Naive thymus-derived CD4-positive, alpha-beta T cell (primary cell): ENCODE measurements at regions of chr13 and their contacts with region 1.

Region 1: GRCh38 chr13:51452361-51453206 is at the start of gene INTS6:
- DNase-seq: peak; percentile 97 to 100 (median 99)
- ATAC-seq: peak; percentile 91
- H3K4me3 ChIP-seq: peak within 1 kb of the TSS; percentile 81
- H3K4me3 Mint-ChIP-seq: peak within 1 kb of the TSS; percentile 86 to 99 (median 94)
- H3K27ac ChIP-seq: peak within 1 kb of the TSS; percentile 99
- H3K27ac Mint-ChIP-seq: peak within 1 kb of the TSS; percentile 92 to 99 (median 96)
- H3K4me1 ChIP-seq: peaks cover 27 to 32% of the 10 kb centered on the region in 2 donors
- H3K4me1 Mint-ChIP-seq: peaks cover 19 to 66% (median 45%) of the 10 kb centered on the region in 7 donors
- H3K27me3 ChIP-seq: no peaks in the 10 kb centered on the region
- H3K27me3 Mint-ChIP-seq: no peaks in the 10 kb centered on the region
- total RNA-seq, gene INTS6: 60.9 to 67.0 (median 62.7) TPM

Region 2: DNA sequence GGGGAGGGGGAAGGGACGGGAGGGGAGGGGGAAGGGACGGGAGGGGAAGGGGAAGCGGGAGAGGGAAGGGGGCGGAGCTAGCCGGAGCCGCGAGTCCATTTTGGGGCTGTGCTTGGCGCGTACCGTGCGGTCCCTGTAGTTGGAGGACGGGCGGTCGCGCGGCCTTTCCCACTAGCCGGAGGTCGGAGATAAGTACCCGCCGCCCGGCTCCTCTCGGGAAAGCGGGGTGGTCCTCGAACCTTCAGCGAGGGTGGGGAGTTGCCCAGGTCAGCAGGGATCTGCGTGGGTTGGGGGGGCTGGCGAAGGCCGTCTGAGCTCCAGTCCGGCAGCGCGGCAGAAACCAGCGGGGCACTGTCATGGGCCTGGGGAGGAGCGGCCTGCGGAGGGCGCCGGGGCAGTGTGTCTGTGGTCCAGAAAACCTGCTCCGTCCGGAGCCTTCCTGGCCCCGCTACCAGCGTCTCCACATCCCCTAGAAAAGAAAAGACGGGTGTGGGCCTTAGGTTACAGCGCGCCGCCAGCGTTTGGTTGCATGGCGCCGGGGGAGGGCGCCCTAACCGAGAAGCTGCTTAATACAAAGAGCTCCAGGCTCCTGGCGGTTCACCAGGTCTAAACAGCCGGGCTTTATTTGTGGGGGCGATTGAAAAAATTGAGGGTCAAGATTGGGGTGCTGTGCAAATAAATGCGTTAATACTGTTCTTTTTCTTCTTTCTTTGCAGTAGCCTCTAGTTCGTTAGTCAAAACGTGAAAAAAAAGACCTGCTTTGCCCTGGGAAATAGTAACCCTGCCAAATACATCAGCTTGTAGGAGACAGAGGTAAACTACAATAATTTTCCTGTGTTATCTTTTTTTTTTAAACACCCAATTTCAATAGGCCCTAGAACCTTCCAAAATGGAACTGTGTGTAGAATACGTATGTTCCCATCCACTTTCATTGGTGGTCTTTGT is 1455.4 kb before region 1 on chr13 and contains the start of gene TRIM13:
- CTCF ChIA-PET with region 1: no interaction called
- POLR2A ChIA-PET with region 1: interaction called, 4 read pairs
- intact Hi-C with region 1: loop called (anchors 1 to 10 kb)
- DNase-seq: peak; percentile 64 to 85 (median 82)
- ATAC-seq: peak; percentile 88
- H3K4me3 ChIP-seq: peak within 1 kb of the TSS; percentile 97
- H3K4me3 Mint-ChIP-seq: peak within 1 kb of the TSS; percentile 83 to 95 (median 86)
- H3K27ac ChIP-seq: peak within 1 kb of the TSS; percentile 89
- H3K27ac Mint-ChIP-seq: peak within 1 kb of the TSS; percentile 84 to 92 (median 87)
- H3K4me1 ChIP-seq: peaks cover 25 to 31% of the 10 kb centered on the region in 2 donors
- H3K4me1 Mint-ChIP-seq: peaks cover 16 to 57% (median 49%) of the 10 kb centered on the region in 7 donors
- H3K27me3 ChIP-seq: no peaks in the 10 kb centered on the region
- H3K27me3 Mint-ChIP-seq: no peaks in the 10 kb centered on the region
- total RNA-seq, gene TRIM13: 18.3 to 27.1 (median 21.8) TPM

Region 3: GRCh38 chr13:50923272-50923671 is 529.3 kb before region 1 on chr13:
- CTCF ChIA-PET with region 1: no interaction called
- POLR2A ChIA-PET with region 1: no interaction called
- intact Hi-C with region 1: no loop called
- DNase-seq: no peak
- ATAC-seq: no peak
- H3K4me3 ChIP-seq: no peak overlapping the region
- H3K4me3 Mint-ChIP-seq: no peak overlapping the region
- H3K27ac ChIP-seq: no peak overlapping the region
- H3K27ac Mint-ChIP-seq: no peak overlapping the region
- H3K4me1 ChIP-seq: peaks cover 0 to 4% of the 10 kb centered on the region in 2 donors
- H3K4me1 Mint-ChIP-seq: peaks cover 20 to 59% (median 51%) of the 10 kb centered on the region in 7 donors
- H3K27me3 ChIP-seq: no peaks in the 10 kb centered on the region
- H3K27me3 Mint-ChIP-seq: no peaks in the 10 kb centered on the region

Region 4: DNA sequence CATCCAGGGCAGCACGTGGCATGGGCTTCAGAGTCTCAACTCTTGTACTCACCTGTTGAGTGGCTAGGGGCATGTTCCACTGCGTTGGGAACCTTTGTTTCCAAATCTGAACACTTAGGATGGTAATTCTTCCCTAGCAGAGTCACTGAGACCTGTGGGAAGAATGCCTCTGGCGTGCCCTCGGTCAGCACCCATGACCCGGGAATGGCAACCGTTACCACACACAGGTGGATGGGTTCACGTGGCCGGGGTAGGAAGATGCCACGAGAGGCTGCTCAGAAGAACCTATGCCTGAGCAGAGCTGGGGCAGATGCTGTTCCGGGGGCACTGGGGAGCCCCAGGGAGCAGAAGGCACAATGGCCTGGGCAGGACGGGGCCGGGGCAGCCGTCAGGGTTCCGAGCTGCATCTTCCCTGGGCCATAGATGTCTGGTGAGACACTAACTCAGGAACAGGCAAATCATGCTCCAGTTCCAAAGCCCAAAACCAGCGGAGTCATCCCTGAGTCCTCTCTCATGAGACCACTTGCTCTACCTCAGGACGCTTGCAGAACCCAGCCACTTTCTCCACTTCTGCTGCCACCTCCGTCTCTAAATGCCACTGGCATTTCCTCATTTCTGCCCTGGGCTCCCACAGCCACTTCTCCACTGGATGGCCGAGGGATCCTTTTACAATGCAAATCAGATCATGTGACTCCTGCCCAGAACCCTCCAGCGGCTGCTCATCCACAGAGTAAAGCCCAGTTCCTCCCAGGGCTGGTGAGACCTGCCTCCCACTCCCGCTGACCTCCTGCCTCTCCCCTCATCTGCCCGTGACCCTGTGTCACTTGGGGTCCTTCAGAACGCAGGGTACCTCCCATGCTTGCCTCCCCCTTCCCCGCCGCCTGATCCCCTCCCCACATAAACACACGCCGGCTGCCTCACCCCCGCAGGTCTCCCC is 193.7 kb before region 1 on chr13:
- CTCF ChIA-PET with region 1: no interaction called
- POLR2A ChIA-PET with region 1: no interaction called
- intact Hi-C with region 1: no loop called
- DNase-seq: no peak
- ATAC-seq: peak; percentile 61
- H3K4me3 ChIP-seq: no peak overlapping the region
- H3K4me3 Mint-ChIP-seq: no peak overlapping the region
- H3K27ac ChIP-seq: no peak overlapping the region
- H3K27ac Mint-ChIP-seq: no peak overlapping the region
- H3K4me1 ChIP-seq: no peaks in the 10 kb centered on the region
- H3K4me1 Mint-ChIP-seq: no peaks in the 10 kb centered on the region
- H3K27me3 ChIP-seq: no peaks in the 10 kb centered on the region
- H3K27me3 Mint-ChIP-seq: no peaks in the 10 kb centered on the region

Region 5: DNA sequence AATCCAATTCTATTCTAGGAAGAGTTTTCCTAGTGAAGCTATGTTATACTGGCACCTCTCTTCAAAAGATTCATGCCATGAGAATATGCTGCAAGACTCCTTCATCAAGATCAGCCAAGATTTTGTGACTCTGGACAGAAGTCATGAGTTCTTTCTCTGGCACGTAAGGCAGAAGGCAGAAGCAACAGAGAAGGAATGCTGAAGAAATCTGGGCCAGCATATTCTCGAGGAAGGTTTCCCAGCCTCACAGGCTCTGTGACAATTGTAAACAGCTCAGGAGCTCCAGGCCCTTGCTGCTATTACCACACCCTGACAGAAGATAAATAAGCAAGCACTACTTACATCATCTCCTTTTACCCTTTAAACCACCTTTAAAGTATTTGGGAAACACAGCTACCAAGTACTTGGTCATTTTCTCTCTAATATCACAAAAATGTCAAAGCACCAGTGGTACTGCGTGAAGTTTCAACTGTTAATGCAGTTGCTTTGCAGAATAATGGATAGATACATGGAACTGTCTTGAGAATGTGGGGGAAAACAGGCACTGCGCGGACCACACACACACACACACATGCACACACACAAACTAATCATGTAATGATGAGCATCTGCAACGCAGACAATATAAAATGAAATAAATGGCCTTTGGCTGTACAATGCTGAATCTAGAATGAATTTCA is 55.2 kb before region 1 on chr13:
- CTCF ChIA-PET with region 1: interaction called, 3 read pairs
- POLR2A ChIA-PET with region 1: no interaction called
- intact Hi-C with region 1: loop called in 1 of 2 experiments (anchors 5 kb)
- DNase-seq: no peak
- ATAC-seq: no peak
- H3K4me3 ChIP-seq: no peak overlapping the region
- H3K4me3 Mint-ChIP-seq: peak overlapping the region in 3 of 10 donors; percentile 3 to 29 (median 19)
- H3K27ac ChIP-seq: no peak overlapping the region
- H3K27ac Mint-ChIP-seq: peak overlapping the region in 3 of 9 donors; percentile 17 to 46 (median 22)
- H3K4me1 ChIP-seq: peaks cover 0 to 4% of the 10 kb centered on the region in 2 donors
- H3K4me1 Mint-ChIP-seq: peaks cover 16 to 81% (median 65%) of the 10 kb centered on the region in 7 donors
- H3K27me3 ChIP-seq: no peaks in the 10 kb centered on the region
- H3K27me3 Mint-ChIP-seq: no peaks in the 10 kb centered on the region

Region 6: GRCh38 chr13:51577680-51578079 is 125.1 kb after region 1 on chr13:
- CTCF ChIA-PET with region 1: no interaction called
- POLR2A ChIA-PET with region 1: interaction called, 26 read pairs
- intact Hi-C with region 1: no loop called
- DNase-seq: no peak
- ATAC-seq: no peak
- H3K4me3 ChIP-seq: no peak overlapping the region
- H3K4me3 Mint-ChIP-seq: no peak overlapping the region
- H3K27ac ChIP-seq: no peak overlapping the region
- H3K27ac Mint-ChIP-seq: no peak overlapping the region
- H3K4me1 ChIP-seq: no peaks in the 10 kb centered on the region
- H3K4me1 Mint-ChIP-seq: peaks cover 0 to 6% (median 3%) of the 10 kb centered on the region in 7 donors
- H3K27me3 ChIP-seq: no peaks in the 10 kb centered on the region
- H3K27me3 Mint-ChIP-seq: peaks cover 0 to 15% (median 0%) of the 10 kb centered on the region in 5 donors

Region 7: DNA sequence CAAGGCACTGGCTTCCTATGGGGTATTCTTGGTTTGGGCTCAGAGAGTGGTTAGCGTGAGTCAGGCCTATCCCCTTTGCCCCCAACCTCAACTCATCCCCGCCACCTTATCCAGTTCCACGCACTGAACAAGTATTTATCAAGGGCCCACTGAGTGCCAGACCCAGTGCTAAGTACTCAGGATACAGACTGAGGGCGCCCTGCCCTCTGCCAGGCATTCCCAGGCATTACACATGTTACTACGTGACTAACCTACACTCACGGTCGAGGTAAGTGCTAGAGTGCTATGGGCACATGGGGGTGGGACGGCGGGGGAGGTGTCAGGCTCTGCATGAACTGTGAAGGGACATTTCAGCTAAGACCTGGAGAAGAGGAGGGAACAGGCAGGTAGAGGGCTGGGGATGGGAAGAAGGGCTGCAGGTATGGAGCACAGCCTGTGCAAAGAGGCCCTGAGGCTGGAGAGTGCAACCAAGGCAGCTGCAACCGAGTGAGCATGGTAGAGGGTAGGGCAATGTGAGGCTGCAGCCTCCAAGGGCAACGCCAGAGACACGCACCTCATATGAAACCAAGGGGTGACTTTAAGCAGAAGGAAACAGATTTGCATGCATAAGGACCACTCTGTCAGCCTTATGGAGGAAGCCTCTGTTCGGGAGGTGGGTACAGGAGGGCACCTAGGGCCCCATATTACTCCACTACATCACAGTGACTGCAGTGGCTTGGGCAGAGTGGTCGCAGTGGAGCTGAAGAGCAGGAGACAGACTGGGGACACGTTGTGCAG is 328.9 kb after region 1 on chr13:
- CTCF ChIA-PET with region 1: no interaction called
- POLR2A ChIA-PET with region 1: no interaction called
- intact Hi-C with region 1: loop called in 1 of 2 experiments (anchors 5 kb)
- DNase-seq: no peak
- ATAC-seq: peak; percentile 55
- H3K4me3 ChIP-seq: no peak overlapping the region
- H3K4me3 Mint-ChIP-seq: no peak overlapping the region
- H3K27ac ChIP-seq: no peak overlapping the region
- H3K27ac Mint-ChIP-seq: peak overlapping the region in 2 of 9 donors; percentile 12 to 66
- H3K4me1 ChIP-seq: no peaks in the 10 kb centered on the region
- H3K4me1 Mint-ChIP-seq: peaks cover 0 to 7% (median 0%) of the 10 kb centered on the region in 7 donors
- H3K27me3 ChIP-seq: no peaks in the 10 kb centered on the region
- H3K27me3 Mint-ChIP-seq: no peaks in the 10 kb centered on the region

Region 8: DNA sequence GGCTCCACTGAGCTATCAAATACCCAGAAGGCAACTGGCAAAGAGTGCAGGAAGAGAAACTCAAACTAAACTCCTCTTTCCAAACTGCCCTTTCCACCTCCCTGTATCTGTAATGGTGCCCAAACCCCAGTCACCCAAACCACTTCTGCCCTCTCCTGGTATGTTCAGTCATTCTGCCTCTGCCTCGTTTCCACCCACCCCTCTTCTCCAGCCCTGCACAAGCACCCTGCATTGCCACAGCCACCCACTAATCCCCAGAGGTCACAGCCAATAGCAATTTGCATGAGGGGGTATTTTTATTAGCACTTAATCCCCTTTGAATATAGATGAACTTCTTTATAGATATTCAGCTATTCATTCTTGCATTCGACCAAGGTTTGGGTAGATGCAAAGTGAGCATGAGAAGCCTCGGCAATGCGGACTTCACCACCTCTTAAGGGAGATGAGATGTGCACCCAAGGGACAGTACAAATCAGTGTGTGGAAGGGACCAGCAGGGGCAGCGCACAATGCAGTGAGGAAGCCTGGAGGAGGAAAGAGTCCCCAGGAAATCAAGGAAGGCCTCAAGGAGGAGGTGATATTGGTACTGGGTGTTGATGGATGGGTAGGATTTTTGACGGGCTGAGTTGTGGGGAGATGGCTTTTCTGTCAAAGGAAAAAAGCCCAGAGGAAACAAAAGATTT is 380.0 kb after region 1 on chr13:
- CTCF ChIA-PET with region 1: interaction called, 4 read pairs
- POLR2A ChIA-PET with region 1: interaction called, 50 read pairs
- intact Hi-C with region 1: no loop called
- DNase-seq: peak in 7 of 9 donors; percentile 68 to 82 (median 76)
- ATAC-seq: peak; percentile 98
- H3K4me3 ChIP-seq: no peak overlapping the region
- H3K4me3 Mint-ChIP-seq: peak overlapping the region in 9 of 10 donors; percentile 37 to 77 (median 55)
- H3K27ac ChIP-seq: no peak overlapping the region
- H3K27ac Mint-ChIP-seq: peak overlapping the region in 8 of 9 donors; percentile 68 to 99 (median 78)
- H3K4me1 ChIP-seq: peaks cover 4 to 33% of the 10 kb centered on the region in 2 donors
- H3K4me1 Mint-ChIP-seq: peaks cover 28 to 54% (median 51%) of the 10 kb centered on the region in 7 donors
- H3K27me3 ChIP-seq: no peaks in the 10 kb centered on the region
- H3K27me3 Mint-ChIP-seq: peaks cover 0 to 8% (median 0%) of the 10 kb centered on the region in 5 donors

Region 9: DNA sequence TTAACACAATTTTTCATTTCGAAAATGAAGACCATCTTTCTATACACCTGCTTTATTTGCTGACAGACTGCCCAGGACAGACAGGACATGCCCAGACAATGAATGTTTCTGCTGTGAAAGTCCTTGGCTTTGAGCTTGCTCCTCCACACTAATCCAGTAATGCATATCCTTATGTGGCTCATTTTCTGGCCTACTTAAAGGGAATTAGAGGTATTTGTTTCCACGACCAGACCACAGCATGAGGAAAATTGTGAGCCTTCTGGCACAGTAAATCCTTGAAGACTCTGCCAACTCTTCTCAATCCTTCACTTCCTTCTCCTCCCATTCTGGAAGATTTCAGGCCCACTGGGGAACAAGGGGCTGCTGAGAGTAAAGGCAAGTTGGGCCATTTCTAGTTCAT is 434.9 kb after region 1 on chr13:
- CTCF ChIA-PET with region 1: no interaction called
- POLR2A ChIA-PET with region 1: no interaction called
- intact Hi-C with region 1: no loop called
- DNase-seq: no peak
- ATAC-seq: no peak
- H3K4me3 ChIP-seq: no peak overlapping the region
- H3K4me3 Mint-ChIP-seq: no peak overlapping the region
- H3K27ac ChIP-seq: no peak overlapping the region
- H3K27ac Mint-ChIP-seq: no peak overlapping the region
- H3K4me1 ChIP-seq: no peaks in the 10 kb centered on the region
- H3K4me1 Mint-ChIP-seq: no peaks in the 10 kb centered on the region
- H3K27me3 ChIP-seq: no peaks in the 10 kb centered on the region
- H3K27me3 Mint-ChIP-seq: peaks cover 0 to 13% (median 7%) of the 10 kb centered on the region in 5 donors

Region 10: DNA sequence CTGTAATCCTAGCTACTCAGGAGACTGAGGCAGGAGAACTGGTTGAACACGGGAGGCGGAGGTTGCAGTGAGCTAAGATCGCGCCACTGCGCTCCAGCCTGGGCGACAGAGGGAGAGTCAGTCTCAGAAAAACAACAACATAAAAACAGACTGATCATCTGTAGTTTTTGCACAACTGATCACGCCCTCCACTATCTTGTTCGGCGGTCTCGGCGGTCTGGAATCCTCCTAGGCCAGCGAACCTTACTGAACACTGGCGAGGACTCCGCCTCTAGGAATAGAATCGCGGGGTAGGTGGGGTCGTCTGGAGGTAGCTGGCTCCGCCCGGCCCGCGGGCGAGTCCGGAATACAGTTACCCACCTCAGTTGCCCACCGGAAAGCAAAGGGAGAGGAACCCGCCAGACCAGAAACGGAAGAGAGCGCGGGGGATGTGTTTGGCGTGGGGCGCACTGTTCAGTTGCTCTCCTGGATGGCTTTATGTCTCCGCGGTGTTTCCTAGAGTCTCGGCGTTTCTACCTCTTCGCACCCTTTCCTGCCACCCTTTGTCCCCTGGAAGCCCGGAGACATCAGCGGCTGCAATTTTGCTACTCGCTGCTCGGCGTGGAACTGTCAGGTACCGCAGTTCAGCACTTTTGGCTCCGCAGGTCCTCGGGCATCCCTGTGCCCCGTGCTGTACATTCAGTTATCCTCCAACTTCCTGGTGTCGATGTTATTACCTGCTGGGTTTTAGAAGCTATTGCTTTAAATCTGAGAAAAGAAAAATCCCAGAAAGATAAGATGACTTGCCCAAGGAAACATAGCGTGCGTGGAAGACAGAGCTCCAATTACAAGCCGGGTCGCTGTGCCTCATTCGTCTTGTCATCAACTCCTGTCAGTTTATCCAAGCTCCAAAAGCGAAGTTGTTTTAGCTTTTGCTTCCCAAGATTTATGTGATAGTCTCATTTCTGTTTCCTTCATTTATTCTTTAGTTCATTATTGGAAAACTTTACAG is 1164.8 kb after region 1 on chr13:
- CTCF ChIA-PET with region 1: no interaction called
- POLR2A ChIA-PET with region 1: interaction called, 6 read pairs
- intact Hi-C with region 1: loop called in 1 of 2 experiments (anchors 1 kb)
- DNase-seq: peak; percentile 61 to 85 (median 81)
- ATAC-seq: peak; percentile 97
- H3K4me3 ChIP-seq: peak overlapping the region; percentile 90
- H3K4me3 Mint-ChIP-seq: peak overlapping the region; percentile 86 to 100 (median 99)
- H3K27ac ChIP-seq: peak overlapping the region; percentile 76
- H3K27ac Mint-ChIP-seq: peak overlapping the region; percentile 95 to 97 (median 96)
- H3K4me1 ChIP-seq: peaks cover 0 to 13% of the 10 kb centered on the region in 2 donors
- H3K4me1 Mint-ChIP-seq: peaks cover 19 to 57% (median 39%) of the 10 kb centered on the region in 7 donors
- H3K27me3 ChIP-seq: no peaks in the 10 kb centered on the region
- H3K27me3 Mint-ChIP-seq: peaks cover 0 to 8% (median 0%) of the 10 kb centered on the region in 5 donors